Endothelial cell of umbilical vein (primary cell): ENCODE measurements at regions of chr16 and their contacts with region 1.

Region 1: DNA sequence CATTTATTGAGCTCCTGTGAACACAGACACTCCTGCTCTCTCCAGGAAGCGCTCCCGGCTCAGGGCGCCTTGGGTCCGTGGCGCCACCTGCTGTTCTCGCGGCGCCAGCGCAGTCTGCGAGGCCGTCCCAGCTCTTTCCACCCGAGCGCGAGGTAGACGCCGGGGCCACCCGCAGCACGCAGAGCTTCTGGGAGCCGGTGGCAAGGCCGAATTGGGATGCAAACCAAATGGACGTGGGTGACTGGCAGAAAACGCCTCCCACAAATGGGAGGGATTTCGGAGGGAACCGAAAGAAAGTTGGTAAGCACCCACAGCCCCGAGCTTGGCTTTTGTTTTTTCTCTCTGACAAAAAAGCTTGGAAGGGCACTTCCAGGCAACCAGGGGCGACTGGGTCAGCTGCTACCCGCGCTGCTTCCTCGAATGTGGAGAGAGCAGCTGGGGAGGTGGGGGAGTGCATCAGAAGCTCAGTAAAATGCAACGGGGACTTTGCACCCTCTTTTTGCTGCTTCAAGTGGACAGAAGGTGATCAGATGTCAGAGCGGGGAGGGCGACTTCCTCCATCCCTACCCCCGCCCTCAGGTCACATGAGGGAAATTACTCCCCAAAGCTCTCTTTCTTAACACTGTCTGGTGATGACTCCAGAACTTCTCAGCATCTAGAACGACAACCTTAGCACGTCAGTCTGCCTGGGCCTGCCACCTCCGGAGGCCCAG is 13.5 kb upstream of the N4BP1 start:
- DNase-seq: peak; percentile 79
- H3K4me3 ChIP-seq: peak overlapping the region in 2 of 3 experiments; percentile 12 to 37
- H3K27ac ChIP-seq: no peak overlapping the region
- H3K4me1 ChIP-seq: peaks cover 2% of the 10 kb centered on the region
- H3K27me3 ChIP-seq: peaks cover 2 to 6% of the 10 kb centered on the region in 2 experiments
- CTCF ChIP-seq: peak; percentile 99
- POLR2A ChIP-seq: no peak

Region 2: DNA sequence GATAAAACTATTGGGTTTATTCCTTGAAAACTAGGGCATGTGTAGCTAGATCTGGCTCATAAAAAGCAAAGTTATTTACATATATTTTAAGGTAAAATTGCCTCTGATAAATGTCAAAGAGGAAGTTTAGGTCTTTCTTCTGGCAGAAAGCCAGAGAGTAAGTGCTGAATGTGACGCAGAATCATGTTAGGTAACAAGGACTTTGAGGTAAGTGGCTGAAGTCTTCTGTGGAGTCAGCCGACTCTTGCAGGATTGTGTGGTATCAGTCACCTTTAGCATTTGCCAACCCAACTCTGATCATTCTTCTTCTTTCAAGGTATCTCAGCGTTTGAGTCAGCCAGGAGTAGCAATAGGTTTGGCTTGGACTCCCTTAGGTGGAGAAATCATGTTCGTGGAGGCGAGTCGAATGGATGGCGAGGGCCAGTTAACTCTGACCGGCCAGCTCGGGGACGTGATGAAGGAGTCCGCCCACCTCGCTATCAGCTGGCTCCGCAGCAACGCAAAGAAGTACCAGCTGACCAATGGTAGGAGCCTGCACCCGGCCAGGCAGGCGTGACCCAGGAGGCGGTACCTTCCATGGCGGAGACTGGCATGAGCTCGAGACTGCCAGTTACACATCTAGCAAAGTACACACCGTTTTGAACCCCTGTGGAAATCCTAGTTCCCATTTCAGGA is 276.1 kb before region 1 on chr16:
- CTCF ChIA-PET with region 1: interaction called, 131 read pairs
- POLR2A ChIA-PET with region 1: no interaction called
- dilution Hi-C with region 1: no loop called
- intact Hi-C with region 1: no loop called
- DNase-seq: no peak
- H3K4me3 ChIP-seq: no peak overlapping the region
- H3K27ac ChIP-seq: no peak overlapping the region
- H3K4me1 ChIP-seq: no peaks in the 10 kb centered on the region
- H3K27me3 ChIP-seq: no peaks in the 10 kb centered on the region
- CTCF ChIP-seq: no peak
- POLR2A ChIP-seq: no peak

Region 3: DNA sequence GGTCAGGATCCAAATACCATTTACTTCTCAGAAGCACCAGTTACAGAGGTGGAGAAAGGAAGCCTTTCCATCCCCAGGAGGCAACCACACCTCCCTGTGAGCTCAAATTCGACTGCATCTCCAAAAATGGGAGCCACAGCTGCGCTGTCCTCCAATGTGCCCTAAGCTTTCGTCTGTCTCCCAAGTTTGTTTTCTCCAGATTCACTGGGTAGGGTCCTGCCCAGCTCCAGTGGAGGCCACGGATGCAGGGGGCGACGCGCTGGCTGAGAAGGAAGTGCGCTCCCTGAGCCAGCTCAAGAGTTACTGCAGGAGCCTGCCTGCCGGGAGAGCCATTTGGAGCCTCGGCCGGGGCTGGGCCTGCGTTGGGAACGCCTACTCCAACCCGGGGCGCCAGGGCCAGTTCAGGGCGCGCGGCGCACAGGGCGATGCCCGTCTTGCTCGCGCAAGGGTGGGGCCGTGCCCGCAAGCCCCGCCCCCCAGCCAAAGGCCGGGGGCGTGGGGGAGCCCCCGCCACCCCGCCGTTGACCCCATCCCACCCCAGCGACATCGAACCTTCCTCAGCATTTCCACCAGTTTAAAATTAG is 257.8 kb before region 1 on chr16:
- CTCF ChIA-PET with region 1: interaction called, 36 read pairs
- POLR2A ChIA-PET with region 1: interaction called, 6 read pairs
- dilution Hi-C with region 1: no loop called
- intact Hi-C with region 1: loop called (anchors 5 kb)
- DNase-seq: peak; percentile 89
- H3K4me3 ChIP-seq: peak overlapping the region; percentile 57 to 83 (median 70)
- H3K27ac ChIP-seq: peak overlapping the region; percentile 66
- H3K4me1 ChIP-seq: peaks cover 14% of the 10 kb centered on the region
- H3K27me3 ChIP-seq: no peaks in the 10 kb centered on the region
- CTCF ChIP-seq: peak in 1 of 2 donors; percentile 18
- POLR2A ChIP-seq: peak; percentile 50

Region 4: DNA sequence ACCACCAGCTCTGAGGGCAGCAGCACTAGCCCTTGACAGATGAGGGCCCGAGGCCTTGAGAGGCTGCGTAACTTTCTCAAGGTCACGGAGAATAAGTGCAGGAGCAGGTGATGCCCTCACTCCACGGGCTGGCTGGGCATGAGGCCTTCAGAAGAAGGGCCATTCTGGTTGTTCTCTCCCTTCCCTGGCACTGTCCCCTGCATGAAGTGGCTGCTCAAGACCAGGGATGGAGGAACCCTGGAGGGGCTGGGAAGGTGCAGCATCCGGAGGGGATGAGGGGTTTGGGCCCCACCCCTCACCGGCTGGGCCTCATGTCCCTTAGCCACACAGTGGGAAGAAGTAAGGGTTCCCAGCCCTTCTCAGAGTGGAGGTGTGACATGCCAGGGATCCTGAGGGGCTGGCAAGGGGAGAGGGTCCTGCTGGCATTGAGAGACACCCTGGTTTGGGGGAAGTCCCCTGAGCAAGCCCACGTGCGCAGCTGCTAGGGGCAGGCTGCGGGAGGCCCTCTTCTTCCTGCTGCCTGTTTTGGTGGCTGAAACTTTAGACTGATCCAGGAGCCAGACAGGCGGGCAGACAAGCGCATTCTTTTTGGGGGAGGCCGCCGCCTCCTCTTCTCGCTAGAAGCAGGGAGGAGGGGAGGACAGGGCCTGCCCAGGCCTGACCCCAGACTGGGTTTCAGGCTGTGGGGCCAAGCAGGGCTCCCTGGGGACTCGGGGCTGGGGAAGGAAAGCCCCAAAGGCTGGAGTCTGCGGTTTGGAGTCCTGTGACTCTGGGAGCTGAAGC is 87.4 kb before region 1 on chr16:
- CTCF ChIA-PET with region 1: interaction called, 21 read pairs
- POLR2A ChIA-PET with region 1: no interaction called
- dilution Hi-C with region 1: no loop called
- intact Hi-C with region 1: loop called (anchors 1 kb)
- DNase-seq: no peak
- H3K4me3 ChIP-seq: no peak overlapping the region
- H3K27ac ChIP-seq: no peak overlapping the region
- H3K4me1 ChIP-seq: peaks cover 5% of the 10 kb centered on the region
- H3K27me3 ChIP-seq: no peaks in the 10 kb centered on the region
- CTCF ChIP-seq: no peak
- POLR2A ChIP-seq: no peak

Region 5: DNA sequence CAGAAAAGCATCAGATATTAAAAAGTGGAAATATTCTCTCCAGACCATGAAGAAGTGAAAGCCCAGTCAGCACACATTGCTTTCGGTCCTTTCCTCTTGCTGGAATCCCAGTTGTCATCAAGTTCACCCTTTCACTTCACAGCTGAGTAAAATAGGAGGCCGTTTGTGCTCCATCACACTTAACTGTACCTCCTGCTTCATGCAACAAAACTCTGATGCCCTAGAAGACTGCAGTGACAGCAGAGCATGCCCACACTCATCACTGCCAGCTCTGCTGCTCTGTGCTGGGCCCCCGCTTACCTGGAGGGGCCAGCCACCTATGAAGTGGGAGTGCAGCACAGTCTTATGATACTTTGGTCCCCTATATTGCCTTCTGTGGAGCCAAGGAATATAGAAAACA is 75.9 kb before region 1 on chr16:
- CTCF ChIA-PET with region 1: interaction called, 21 read pairs
- POLR2A ChIA-PET with region 1: no interaction called
- dilution Hi-C with region 1: no loop called
- intact Hi-C with region 1: no loop called
- DNase-seq: no peak
- H3K4me3 ChIP-seq: no peak overlapping the region
- H3K27ac ChIP-seq: no peak overlapping the region
- H3K4me1 ChIP-seq: no peaks in the 10 kb centered on the region
- H3K27me3 ChIP-seq: no peaks in the 10 kb centered on the region
- CTCF ChIP-seq: no peak
- POLR2A ChIP-seq: no peak

Region 6: DNA sequence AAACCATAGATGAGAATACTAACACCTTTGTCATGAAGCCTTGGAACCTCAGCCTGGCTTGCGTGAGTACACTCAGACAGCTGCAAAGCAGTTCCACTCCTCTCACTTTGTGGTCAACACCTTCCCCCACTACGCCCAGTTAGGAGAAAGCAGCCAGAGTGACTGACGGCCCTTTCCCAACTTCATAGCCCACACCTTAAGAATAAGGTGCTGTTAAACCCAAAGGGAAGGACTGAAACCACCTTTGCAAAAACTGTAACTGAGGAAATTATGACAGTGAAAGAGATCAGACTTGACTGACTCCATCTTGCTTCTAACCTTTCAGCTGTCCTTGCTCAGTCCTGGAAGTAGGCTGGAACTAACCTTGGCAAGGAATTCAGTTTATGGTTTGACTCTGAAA is 27.1 kb before region 1 on chr16:
- CTCF ChIA-PET with region 1: interaction called, 11 read pairs
- POLR2A ChIA-PET with region 1: no interaction called
- dilution Hi-C with region 1: no loop called
- intact Hi-C with region 1: no loop called
- DNase-seq: no peak
- H3K4me3 ChIP-seq: no peak overlapping the region
- H3K27ac ChIP-seq: no peak overlapping the region
- H3K4me1 ChIP-seq: peaks cover 20% of the 10 kb centered on the region
- H3K27me3 ChIP-seq: no peaks in the 10 kb centered on the region
- CTCF ChIP-seq: no peak
- POLR2A ChIP-seq: no peak

Region 7: DNA sequence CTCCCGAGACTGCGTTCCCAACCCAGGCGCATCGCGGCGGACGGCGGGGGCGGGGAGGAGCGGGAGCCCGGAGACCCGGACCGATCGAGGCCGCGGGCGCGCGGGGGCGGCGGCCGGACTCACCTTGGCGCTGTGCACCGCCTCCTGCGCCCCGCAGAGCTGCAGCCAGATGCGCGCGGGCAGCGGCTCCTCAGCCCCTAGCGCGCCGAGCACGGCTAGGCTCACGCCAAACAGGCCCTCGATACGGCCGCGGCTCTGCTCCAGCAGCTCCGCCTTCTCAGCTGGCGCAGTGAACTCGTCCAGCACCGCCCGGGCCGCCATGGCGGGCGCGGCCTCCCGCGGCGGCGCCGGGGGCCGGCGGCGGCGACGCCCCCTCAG is 13.8 kb before region 1 on chr16:
- CTCF ChIA-PET with region 1: interaction called, 35 read pairs
- POLR2A ChIA-PET with region 1: no interaction called
- dilution Hi-C with region 1: no loop called
- intact Hi-C with region 1: no loop called
- DNase-seq: no peak
- H3K4me3 ChIP-seq: peak overlapping the region; percentile 83 to 92 (median 84)
- H3K27ac ChIP-seq: peak overlapping the region; percentile 87
- H3K4me1 ChIP-seq: peaks cover 5% of the 10 kb centered on the region
- H3K27me3 ChIP-seq: no peaks in the 10 kb centered on the region
- CTCF ChIP-seq: no peak
- POLR2A ChIP-seq: no peak